ENCODE measurements at regions of chr4 and their contacts with region 1.

Region 1: DNA sequence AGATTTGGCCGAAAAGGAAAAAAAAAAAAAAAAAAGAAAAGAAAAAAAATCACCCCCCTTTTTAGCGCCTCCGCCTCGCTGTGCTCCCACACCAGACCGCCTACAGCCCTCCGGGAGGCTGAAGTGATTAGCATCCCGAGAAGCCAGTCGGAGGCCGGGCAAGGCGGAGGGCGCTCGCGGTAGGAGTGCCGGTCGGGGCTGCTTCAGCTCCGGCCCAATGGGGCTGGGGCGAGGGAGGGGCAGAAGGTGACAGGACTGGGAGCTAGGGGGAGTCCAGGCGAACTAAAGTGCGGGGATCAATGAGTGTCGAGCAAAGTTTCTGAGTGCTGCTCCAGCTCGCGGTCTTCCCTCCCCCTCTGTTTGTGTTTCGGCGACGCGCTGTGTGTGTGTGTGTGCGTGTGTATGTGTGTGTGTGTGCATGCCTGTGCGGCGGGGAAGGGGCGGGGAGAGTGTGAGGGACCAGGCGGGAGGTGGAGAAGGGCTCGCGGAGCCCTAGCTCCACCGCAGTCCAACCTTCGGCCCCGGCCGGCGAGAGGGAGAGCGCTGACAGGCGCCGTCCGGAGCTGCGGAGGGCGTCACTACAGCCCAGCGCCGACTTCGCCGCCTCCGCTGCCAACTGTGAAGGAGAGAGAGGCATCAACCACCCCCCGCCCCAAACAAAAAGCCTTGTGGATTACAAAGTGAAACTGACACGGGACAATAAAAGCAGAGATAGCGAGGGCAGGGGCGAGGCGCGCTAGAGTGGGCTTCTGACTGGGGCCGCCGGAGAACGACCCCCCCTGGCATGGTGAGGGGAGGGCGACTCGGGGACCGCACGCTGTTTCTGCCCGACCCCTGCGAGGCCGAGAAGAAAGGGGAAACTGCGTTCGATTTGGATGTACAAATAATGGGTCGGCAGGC is at the start of gene FAT4:
- DNase-seq: peak; percentile 87 to 93
- ATAC-seq: peak; percentile 81 to 87
- H3K4me3 ChIP-seq: peak within 1 kb of the TSS; percentile 72 to 96 (median 94)
- H3K27ac ChIP-seq: peak within 1 kb of the TSS; percentile 80 to 88 (median 84)
- H3K4me1 ChIP-seq: peaks cover 12 to 32% of the 10 kb centered on the region in 2 donors
- H3K27me3 ChIP-seq: no peaks in the 10 kb centered on the region
- CTCF ChIP-seq: peak in 2 of 5 experiments; percentile 15 to 48
- POLR2A ChIP-seq: peak; percentile 45 to 83
- total RNA-seq, gene FAT4: 3.4 to 5.3 (median 3.9) TPM

Region 2: GRCh38 chr4:124980276-124980752 is 334.6 kb before region 1 on chr4:
- in situ Hi-C with region 1: no loop called
- intact Hi-C with region 1: no loop called
- DNase-seq: no peak
- ATAC-seq: no peak
- H3K4me3 ChIP-seq: no peak overlapping the region
- H3K27ac ChIP-seq: no peak overlapping the region
- H3K4me1 ChIP-seq: no peaks in the 10 kb centered on the region
- H3K27me3 ChIP-seq: no peaks in the 10 kb centered on the region
- CTCF ChIP-seq: no peak
- POLR2A ChIP-seq: no peak

Region 3: GRCh38 chr4:125368671-125369081 is 53.8 kb after region 1 on chr4:
- in situ Hi-C with region 1: no loop called
- intact Hi-C with region 1: no loop called
- DNase-seq: no peak
- ATAC-seq: no peak
- H3K4me3 ChIP-seq: peak overlapping the region; percentile 44 to 58 (median 50)
- H3K27ac ChIP-seq: peak overlapping the region in 2 of 4 donors; percentile 3 to 26
- H3K4me1 ChIP-seq: peaks cover 6 to 8% of the 10 kb centered on the region in 2 donors
- H3K27me3 ChIP-seq: no peaks in the 10 kb centered on the region
- CTCF ChIP-seq: no peak
- POLR2A ChIP-seq: no peak

Region 4: DNA sequence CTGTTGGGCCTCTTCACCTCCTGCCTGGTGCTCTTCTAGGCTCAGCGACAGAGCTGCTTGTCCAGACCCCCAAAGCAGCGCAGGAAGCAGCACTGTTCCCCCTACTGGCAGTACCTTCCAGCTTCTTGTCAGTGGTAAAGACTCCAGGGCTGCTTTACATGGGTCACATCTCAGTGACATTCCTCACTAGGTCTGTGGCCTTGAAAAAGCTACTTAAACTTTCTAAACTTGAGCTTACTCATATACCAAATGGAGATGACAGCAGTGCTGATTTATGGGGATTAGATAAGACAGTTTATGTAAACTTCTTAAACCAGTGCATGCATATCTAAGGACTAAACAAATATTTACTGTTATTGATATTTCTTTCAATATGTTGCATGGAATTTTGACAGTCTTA is 117.2 kb after region 1 on chr4:
- in situ Hi-C with region 1: no loop called
- intact Hi-C with region 1: loop called (anchors 5 kb)
- DNase-seq: no peak
- ATAC-seq: no peak
- H3K4me3 ChIP-seq: no peak overlapping the region
- H3K27ac ChIP-seq: no peak overlapping the region
- H3K4me1 ChIP-seq: no peaks in the 10 kb centered on the region
- H3K27me3 ChIP-seq: no peaks in the 10 kb centered on the region
- CTCF ChIP-seq: peak in 1 of 5 experiments; percentile 11
- POLR2A ChIP-seq: no peak

Region 5: DNA sequence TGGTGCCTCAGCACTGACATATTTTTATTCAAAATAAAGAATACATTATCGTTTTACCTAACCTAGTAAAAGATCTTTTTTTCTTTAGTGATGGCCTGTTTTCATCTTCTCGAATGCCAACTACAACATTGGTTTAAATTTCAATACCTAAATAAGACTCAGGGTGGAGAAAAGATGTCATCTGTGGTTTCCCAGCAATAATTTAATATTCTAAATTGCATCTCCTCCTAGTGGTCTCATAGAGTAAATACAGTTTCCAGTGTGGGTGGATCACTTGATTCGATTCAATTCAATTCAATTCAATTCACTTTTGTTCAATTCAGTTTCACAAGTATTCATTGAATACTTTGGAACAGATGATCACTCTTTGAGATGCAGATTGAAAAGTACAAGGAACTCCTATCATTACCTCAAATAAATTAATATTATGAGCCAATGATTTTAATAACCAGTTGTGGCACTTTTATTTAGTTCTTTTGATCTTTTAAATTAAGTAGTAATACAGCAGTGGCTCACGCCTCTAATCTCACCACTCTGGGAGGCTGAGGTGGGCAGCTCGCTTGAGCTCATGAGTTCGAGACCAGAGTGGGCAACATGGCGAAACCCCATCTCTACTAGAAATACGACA is 427.0 kb after region 1 on chr4:
- in situ Hi-C with region 1: loop called (anchors 5 to 25 kb)
- intact Hi-C with region 1: loop called (anchors 2 kb)
- DNase-seq: no peak
- ATAC-seq: no peak
- H3K4me3 ChIP-seq: no peak overlapping the region
- H3K27ac ChIP-seq: no peak overlapping the region
- H3K4me1 ChIP-seq: peaks cover 0 to 3% of the 10 kb centered on the region in 2 donors
- H3K27me3 ChIP-seq: no peaks in the 10 kb centered on the region
- CTCF ChIP-seq: peak in 4 of 5 experiments; percentile 31 to 49 (median 43)
- POLR2A ChIP-seq: no peak

Region 6: DNA sequence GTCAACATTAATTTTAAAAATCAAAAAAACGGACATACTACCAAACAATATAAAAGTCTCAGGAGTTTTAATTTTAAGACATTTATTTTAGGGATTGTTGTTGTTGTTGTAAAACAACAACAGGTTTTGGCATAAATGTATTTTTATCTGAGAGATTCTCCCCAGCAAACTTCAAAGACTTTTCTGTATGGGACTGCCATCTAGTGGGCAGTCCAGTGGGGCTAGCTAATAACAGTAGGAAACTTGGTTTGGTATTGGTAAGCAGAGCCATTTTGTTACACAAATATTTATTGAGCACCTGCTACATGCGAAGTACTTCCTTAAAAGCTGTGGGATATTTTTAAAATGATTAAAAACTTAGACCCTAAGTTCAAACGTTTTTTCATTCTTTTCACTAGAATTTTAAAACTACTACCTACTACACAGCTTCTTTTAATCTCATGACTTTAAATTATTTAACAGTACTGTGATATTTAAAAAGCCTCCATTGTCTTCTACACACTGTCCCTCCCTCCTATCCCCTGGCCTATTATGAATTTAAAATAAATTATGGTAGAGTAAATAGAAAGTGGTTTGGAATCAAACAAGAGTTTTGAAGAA is 1289.4 kb after region 1 on chr4:
- in situ Hi-C with region 1: loop called in 1 of 4 experiments (anchors 25 kb)
- intact Hi-C with region 1: no loop called
- DNase-seq: no peak
- ATAC-seq: no peak
- H3K4me3 ChIP-seq: no peak overlapping the region
- H3K27ac ChIP-seq: no peak overlapping the region
- H3K4me1 ChIP-seq: no peaks in the 10 kb centered on the region
- H3K27me3 ChIP-seq: no peaks in the 10 kb centered on the region
- CTCF ChIP-seq: peak in 2 of 5 experiments; percentile 19 to 32
- POLR2A ChIP-seq: no peak

Measured in gastrocnemius medialis (tissue), 4 donors.